Esophagus muscularis mucosa (tissue), 4 donors: ENCODE measurements at regions of chr14 and their contacts with region 1.

Region 1: GRCh38 chr14:23327947-23328744 is 6.9 kb downstream of the PABPN1 start:
- DNase-seq: no peak
- H3K4me3 ChIP-seq: no peak overlapping the region
- H3K27ac ChIP-seq: no peak overlapping the region
- H3K4me1 ChIP-seq: peaks cover 5 to 15% (median 9%) of the 10 kb centered on the region in 4 donors
- H3K27me3 ChIP-seq: no peaks in the 10 kb centered on the region
- CTCF ChIP-seq: peak; percentile 83 to 85 (median 84)
- EP300 ChIP-seq: no peak
- POLR2A ChIP-seq: no peak

Region 2: GRCh38 chr14:23147676-23148075 is 180.5 kb before region 1 on chr14:
- intact Hi-C with region 1: no loop called
- DNase-seq: no peak
- H3K4me3 ChIP-seq: no peak overlapping the region
- H3K27ac ChIP-seq: peak overlapping the region; percentile 77 to 94 (median 91)
- H3K4me1 ChIP-seq: peaks cover 59 to 99% (median 92%) of the 10 kb centered on the region in 4 donors
- H3K27me3 ChIP-seq: no peaks in the 10 kb centered on the region
- CTCF ChIP-seq: no peak
- EP300 ChIP-seq: no peak
- POLR2A ChIP-seq: no peak

Region 3: GRCh38 chr14:23258256-23258655 is 69.9 kb before region 1 on chr14:
- intact Hi-C with region 1: no loop called
- DNase-seq: no peak
- H3K4me3 ChIP-seq: no peak overlapping the region
- H3K27ac ChIP-seq: peak overlapping the region in 1 of 4 donors; percentile 18
- H3K4me1 ChIP-seq: peaks cover 0 to 13% (median 4%) of the 10 kb centered on the region in 4 donors
- H3K27me3 ChIP-seq: peaks cover 0 to 4% (median 0%) of the 10 kb centered on the region in 4 donors
- CTCF ChIP-seq: no peak
- EP300 ChIP-seq: peak; percentile 21
- POLR2A ChIP-seq: no peak

Region 4: GRCh38 chr14:23469127-23469905 is 141.2 kb after region 1 on chr14 and contains the start of gene NGDN:
- intact Hi-C with region 1: loop called (anchors 5 kb)
- DNase-seq: peak; percentile 99
- H3K4me3 ChIP-seq: peak within 1 kb of the TSS; percentile 71 to 95 (median 92)
- H3K27ac ChIP-seq: peak within 1 kb of the TSS; percentile 80 to 87 (median 86)
- H3K4me1 ChIP-seq: peaks cover 6 to 12% (median 9%) of the 10 kb centered on the region in 4 donors
- H3K27me3 ChIP-seq: no peaks in the 10 kb centered on the region
- CTCF ChIP-seq: peak; percentile 73 to 88 (median 86)
- EP300 ChIP-seq: no peak
- POLR2A ChIP-seq: peak; percentile 31
- total RNA-seq, gene NGDN: 21.6 to 43.2 (median 34.0) TPM